ENCODE measurements at regions of chr11 and their contacts with region 1.

Region 1: DNA sequence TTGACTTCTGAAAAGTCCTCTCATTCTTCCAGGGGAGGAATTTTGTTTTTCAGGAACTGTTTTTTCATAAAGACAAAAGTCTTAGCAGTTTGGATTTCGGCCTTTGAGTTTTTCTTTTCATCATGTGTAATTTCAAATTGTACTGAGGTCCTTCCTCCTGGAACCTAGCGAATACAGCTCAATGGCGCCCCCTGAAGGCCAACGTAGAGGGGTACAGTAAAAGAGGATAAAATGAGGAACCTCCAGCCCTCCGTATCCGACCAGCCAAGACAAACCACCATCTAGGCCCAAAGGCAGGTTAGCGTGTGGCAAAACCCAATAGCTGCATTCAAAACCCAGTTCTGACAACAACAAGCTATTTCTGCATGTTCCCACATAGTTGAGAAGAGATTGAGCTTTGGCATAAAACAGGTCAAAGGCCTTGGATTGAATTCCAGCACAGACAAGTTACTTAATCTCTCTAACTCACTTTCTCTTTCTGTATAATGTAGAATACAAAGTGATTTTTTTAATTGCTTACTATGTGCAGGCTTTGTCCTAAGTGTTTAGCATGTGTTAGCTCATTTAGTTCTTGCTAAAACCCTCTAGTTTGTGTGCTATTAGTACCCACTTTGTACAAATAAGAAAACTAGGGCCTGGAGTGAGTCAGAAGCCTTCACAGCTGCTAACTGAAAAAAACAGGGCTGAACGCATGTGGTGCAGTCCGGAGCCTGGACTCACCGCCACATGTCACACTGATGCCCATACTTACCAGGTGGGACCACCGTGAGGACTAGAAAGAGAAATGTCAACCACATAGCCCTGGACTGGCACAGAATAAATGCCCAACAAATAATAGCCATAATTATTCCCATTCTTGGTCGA is 43.2 kb upstream of the ETS1 start:
- DNase-seq: no peak
- H3K4me3 ChIP-seq: no peak overlapping the region
- H3K27me3 ChIP-seq: no peaks in the 10 kb centered on the region
- CTCF ChIP-seq: peak; percentile 87

Region 2: GRCh38 chr11:128026596-128026995 is 604.0 kb before region 1 on chr11:
- CTCF ChIA-PET with region 1: interaction called, 10 read pairs
- POLR2A ChIA-PET with region 1: no interaction called
- DNase-seq: peak; percentile 99
- H3K4me3 ChIP-seq: no peak overlapping the region
- H3K27me3 ChIP-seq: no peaks in the 10 kb centered on the region
- CTCF ChIP-seq: no peak

Region 3: DNA sequence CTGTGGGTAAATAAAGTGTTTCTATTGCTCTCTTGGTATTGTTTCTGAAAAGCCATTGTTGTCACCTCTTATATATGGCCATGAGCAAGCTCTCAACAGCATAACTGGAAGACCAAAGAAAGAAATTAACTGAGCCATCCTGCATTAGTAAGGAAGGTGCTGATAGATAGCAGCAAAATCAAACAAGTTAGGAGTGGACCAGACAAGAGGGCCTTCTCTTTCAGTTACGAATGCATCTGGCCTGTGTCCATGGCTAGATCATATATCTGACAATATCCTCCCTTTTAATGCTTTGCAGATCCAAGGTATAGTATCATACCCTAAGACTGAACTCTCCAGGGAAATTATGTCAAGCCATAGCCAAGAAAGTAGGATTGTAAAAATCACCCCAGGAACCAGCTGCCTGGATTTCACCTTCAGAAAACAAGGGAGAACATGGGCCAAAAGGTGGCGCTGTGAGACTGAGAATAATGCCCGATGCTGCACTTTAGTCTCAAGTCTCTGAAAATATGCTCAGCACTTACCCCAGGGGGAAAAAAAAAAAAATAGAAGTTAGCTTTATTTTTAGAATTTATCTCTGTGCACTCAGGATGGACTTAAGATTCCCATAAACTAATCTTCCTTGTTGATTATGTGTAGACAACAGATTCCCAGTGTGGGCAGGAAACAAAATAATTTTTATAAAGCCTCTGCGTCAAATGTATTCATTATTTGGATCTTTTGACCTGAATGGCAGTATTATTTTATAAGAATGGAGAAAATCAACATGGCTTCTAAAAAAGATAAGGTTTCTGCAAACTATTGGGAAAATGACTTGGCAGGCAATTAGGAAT is 458.3 kb before region 1 on chr11:
- CTCF ChIA-PET with region 1: interaction called, 116 read pairs
- POLR2A ChIA-PET with region 1: interaction called, 3 read pairs
- DNase-seq: peak; percentile 44
- H3K4me3 ChIP-seq: no peak overlapping the region
- H3K27me3 ChIP-seq: no peaks in the 10 kb centered on the region
- CTCF ChIP-seq: peak; percentile 78

Region 4: GRCh38 chr11:128290106-128290840 is 340.3 kb before region 1 on chr11:
- CTCF ChIA-PET with region 1: interaction called, 57 read pairs
- POLR2A ChIA-PET with region 1: no interaction called
- DNase-seq: peak; percentile 67
- H3K4me3 ChIP-seq: no peak overlapping the region
- H3K27me3 ChIP-seq: no peaks in the 10 kb centered on the region
- CTCF ChIP-seq: peak; percentile 75

Region 5: GRCh38 chr11:128506999-128507611 is 123.5 kb before region 1 on chr11:
- CTCF ChIA-PET with region 1: interaction called, 18 read pairs
- POLR2A ChIA-PET with region 1: no interaction called
- DNase-seq: peak; percentile 96
- H3K4me3 ChIP-seq: 0 out of 2 replicates have a peak overlapping the region, but pooled peaks have one; percentile 6
- H3K27me3 ChIP-seq: no peaks in the 10 kb centered on the region
- CTCF ChIP-seq: no peak

Region 6: DNA sequence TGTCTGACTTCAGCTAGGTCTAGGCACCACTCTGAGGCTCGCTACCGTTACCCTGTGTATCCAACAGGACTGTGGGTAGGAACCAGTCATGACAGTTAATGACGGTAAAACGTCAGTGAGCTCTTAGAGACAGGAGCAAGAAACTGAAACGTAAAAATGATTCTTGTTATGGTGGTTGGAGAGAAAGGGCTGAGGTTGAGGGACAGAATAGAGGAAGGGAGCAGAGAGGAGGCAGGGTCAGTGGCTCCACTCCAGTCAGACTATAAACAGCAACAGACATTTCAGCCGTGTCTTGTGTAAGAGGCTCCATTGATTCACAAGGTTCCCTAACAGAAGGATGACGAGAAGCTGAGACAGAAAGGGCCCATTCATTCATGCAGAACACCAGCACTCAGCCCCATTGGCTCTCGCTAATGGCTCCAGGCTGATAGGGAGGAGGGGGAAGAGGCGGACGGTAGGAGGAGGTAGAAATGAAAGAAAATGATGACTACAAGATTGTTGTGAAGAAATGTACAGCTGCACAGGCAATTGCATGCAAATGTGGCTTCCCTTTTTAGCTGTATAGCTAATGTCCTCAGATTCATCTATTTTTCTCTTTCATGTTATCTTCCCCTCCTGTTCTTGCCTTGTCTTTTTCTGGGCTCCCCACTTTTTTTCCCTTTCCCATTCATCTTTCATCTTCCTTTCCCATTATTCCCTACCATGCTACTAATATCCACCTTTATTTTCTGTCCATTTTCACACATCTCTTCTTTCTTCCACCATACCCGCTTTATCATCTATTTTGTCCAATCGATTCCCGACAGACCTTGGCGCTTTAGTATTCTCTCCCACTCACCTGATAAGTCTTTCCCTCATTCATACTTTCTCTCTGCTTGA is 77.6 kb before region 1 on chr11:
- CTCF ChIA-PET with region 1: interaction called, 15 read pairs
- POLR2A ChIA-PET with region 1: no interaction called
- DNase-seq: no peak
- H3K4me3 ChIP-seq: no peak overlapping the region
- H3K27me3 ChIP-seq: no peaks in the 10 kb centered on the region
- CTCF ChIP-seq: no peak

Region 7: DNA sequence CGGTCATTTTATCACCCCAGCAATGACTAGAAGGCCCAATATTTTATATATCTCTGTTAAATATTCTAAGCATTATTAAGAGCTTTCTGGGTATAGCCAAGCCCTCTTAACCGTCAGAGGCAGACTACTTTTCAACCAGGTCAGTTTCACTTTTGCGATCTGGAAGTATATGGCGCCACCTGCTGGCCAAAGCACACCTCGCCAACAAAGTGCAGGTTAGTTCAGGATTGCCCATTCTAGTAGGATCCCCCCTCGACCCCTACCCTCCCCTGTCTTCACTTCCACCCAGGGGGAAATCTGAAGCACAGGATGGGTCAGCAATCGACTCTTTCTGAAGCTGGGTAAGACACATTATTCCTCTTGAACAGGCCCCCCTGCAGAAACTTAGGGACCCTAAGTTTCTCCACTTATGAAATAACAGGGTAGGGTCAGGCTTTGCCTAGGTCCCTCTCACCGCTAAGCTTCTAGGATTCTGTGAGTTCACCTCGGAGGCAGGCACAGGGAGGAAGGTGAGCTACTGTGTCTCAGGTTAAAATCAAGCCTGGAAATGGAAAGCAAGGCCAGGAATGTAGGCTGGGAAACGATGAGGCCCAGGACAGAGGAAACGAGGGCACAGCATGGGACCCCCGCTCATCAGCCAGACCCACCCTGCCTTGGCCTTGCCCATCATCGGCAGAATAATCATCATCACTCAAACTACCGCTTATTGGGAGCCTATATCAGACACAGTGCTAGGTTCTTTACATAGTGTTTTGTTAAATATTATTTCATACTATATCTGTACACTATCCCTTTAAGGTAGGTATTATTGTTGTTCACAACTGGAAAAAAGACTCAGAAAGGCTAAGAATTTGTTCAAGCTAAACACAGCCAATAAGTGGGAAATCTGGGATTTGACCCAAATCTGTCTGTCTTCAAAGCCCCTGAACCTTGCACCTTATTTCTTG is 200.8 kb after region 1 on chr11:
- CTCF ChIA-PET with region 1: interaction called, 43 read pairs
- POLR2A ChIA-PET with region 1: no interaction called
- DNase-seq: no peak
- H3K4me3 ChIP-seq: no peak overlapping the region
- H3K27me3 ChIP-seq: no peaks in the 10 kb centered on the region; the same call in 1 of the 2 replicates
- CTCF ChIP-seq: peak; percentile 84